ENCODE measurements at regions of chr3 and their contacts with region 1.

Region 1: DNA sequence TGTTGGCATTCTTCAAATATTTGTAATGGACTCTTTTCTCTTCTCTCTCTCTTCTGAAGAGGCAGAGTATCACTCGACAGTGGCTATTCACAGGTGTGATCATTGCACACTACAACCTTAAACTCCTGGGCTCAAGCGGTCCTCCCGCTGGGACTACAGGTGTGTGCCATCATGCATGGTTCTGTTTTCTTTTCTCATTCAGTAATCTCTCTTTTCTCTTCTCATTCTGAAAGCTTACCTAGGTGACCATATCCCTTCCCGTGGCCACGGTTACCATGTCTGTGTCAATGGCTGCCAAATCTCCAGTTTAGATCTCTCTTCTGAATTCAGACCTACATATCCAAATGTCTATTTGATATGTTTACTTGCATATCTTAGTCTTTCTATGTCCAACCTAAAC is 96.3 kb downstream of the SOX2 start:
- DNase-seq: no peak
- H3K4me3 ChIP-seq: no peak overlapping the region
- H3K27ac ChIP-seq: no peak overlapping the region
- H3K4me1 ChIP-seq: no peaks in the 10 kb centered on the region
- H3K27me3 ChIP-seq: no peaks in the 10 kb centered on the region
- CTCF ChIP-seq: no peak
- EP300 ChIP-seq: no peak
- POLR2A ChIP-seq: no peak

Region 2: GRCh38 chr3:181932039-181932438 is 124.0 kb after region 1 on chr3:
- intact Hi-C with region 1: loop called in 1 of 4 experiments (anchors 10 kb)
- DNase-seq: no peak
- H3K4me3 ChIP-seq: no peak overlapping the region
- H3K27ac ChIP-seq: no peak overlapping the region
- H3K4me1 ChIP-seq: no peaks in the 10 kb centered on the region
- H3K27me3 ChIP-seq: no peaks in the 10 kb centered on the region
- CTCF ChIP-seq: no peak
- EP300 ChIP-seq: no peak
- POLR2A ChIP-seq: no peak

Measured in ovary (tissue), 10 donors.